ENCODE measurements at regions of chr10 and their contacts with region 1.

Region 1: GRCh38 chr10:31318854-31319601 is at the start of gene ZEB1:
- DNase-seq: peak; percentile 93
- H3K4me3 ChIP-seq: peak within 1 kb of the TSS; percentile 91 to 99 (median 96)
- H3K27ac ChIP-seq: peak within 1 kb of the TSS; percentile 97 to 100 (median 98)
- H3K4me1 ChIP-seq: peaks cover 7 to 34% (median 32%) of the 10 kb centered on the region in 4 donors
- H3K27me3 ChIP-seq: no peaks in the 10 kb centered on the region
- CTCF ChIP-seq: peak; percentile 51 to 76 (median 63)
- EP300 ChIP-seq: no peak
- POLR2A ChIP-seq: peak; percentile 49
- total RNA-seq, gene ZEB1: 124 to 189 (median 154) TPM

Region 2: DNA sequence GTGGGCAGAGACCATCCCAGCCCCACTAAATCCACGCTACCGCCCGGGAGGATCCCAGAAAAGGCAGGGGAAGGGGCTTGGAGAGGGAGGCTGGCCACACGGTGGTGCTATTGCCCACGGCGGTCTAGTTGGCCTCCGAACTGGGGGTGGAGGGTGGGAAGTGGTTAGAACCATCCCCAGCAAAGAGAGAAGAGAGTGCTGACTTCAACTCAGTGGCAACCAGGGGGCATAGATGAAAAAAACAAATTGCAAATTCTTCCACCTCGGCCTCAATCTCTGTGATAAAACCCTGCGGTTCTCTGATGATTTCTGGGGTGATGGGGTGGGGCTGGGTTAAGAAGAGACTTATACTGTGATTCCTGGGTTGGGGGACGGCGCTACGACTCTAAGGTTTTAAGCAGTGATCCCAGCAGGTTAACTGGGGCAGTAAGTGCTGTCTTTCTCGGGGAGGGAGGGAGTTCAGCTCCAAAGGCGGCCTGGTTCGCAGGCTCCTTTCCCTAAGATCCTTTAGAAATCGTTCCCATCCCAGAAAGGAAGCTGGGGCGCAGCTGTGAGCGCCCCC is 535.0 kb before region 1 on chr10:
- intact Hi-C with region 1: loop called (anchors 2 kb)
- DNase-seq: peak; percentile 94
- H3K4me3 ChIP-seq: peak overlapping the region; percentile 73 to 86 (median 78)
- H3K27ac ChIP-seq: peak overlapping the region; percentile 85 to 96 (median 92)
- H3K4me1 ChIP-seq: peaks cover 13 to 32% (median 25%) of the 10 kb centered on the region in 4 donors
- H3K27me3 ChIP-seq: no peaks in the 10 kb centered on the region
- CTCF ChIP-seq: peak; percentile 88 to 90 (median 89)
- EP300 ChIP-seq: no peak
- POLR2A ChIP-seq: no peak

Region 3: DNA sequence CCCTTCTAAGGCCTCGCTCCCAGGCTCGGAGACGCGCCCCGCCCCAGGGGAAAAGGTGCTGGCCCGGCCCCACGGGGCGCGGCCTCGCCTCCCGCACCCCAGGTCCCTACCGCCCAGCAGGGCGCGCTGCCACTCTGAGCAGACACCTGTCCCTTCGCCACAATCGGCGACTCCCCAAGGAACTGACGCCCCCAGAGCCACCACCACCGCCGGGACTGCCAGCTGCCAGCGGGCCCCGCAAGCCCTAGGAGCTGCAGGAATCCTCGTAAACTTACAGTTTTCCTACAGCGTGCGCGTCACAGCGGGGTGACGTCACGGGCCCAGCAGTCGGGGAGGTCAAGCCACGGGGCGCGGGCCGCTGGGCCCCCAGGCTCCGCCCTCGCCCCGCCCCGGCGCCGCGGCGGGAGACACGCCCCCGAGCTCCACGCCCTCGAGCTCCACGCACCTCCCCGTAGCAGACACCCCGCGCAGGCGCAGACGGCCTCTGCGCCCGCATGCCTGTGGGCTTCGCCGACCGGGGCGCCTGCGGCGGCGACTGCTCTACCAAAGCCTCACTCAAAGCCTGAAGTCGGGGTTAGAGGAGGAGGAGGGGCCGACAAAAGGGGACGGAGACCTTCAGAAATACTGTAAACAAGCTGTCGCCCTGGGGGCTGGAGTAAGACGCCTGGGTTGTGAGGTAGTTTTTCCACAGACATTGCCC is 287.3 kb before region 1 on chr10 and contains the start of gene ZNF438:
- intact Hi-C with region 1: loop called (anchors 2 kb)
- DNase-seq: peak; percentile 98
- H3K4me3 ChIP-seq: peak within 1 kb of the TSS; percentile 63 to 74 (median 72)
- H3K27ac ChIP-seq: peak within 1 kb of the TSS; percentile 97 to 100 (median 98)
- H3K4me1 ChIP-seq: peaks cover 22 to 50% (median 47%) of the 10 kb centered on the region in 4 donors
- H3K27me3 ChIP-seq: no peaks in the 10 kb centered on the region
- CTCF ChIP-seq: peak; percentile 47 to 61 (median 61)
- EP300 ChIP-seq: no peak
- POLR2A ChIP-seq: peak; percentile 88
- total RNA-seq, gene ZNF438: 11.0 to 11.6 (median 11.3) TPM

Region 4: DNA sequence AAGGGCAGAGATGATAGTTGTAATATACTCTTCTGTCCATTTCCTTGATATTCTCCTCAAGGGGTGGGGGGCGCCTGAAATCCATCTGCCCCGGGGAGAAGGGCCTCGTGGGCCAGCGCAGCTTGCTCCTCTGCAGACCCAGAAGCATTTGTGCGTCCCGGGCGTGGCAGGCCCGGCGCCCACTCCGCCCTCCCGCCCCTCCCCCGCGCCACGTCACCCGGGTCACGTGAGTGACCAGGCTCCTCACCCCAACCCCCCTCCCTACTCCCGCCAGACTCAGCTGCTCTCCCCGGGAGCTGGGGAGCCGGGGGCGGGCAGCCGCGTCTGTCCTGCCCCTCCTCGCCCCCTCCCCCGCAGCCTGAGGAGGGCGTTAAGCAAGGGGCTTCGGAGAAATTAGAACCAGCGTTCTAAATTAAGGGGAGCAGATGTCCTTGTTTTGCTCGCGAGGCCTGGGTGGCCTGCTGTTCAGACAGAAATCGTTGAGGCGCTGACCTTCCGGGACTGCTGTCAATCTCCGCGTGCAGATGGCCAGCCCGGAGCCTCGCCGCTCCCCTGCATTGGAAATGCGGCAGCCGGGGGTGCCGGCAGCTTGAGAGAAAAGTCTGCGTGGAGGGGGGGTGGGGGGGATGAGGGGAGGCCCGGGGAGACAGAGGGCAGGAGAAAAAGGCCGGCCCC is 185.3 kb before region 1 on chr10:
- intact Hi-C with region 1: loop called (anchors 2 kb)
- DNase-seq: peak; percentile 95
- H3K4me3 ChIP-seq: peak overlapping the region; percentile 56 to 62 (median 60)
- H3K27ac ChIP-seq: peak overlapping the region; percentile 78 to 88 (median 86)
- H3K4me1 ChIP-seq: peaks cover 23 to 47% (median 38%) of the 10 kb centered on the region in 4 donors
- H3K27me3 ChIP-seq: no peaks in the 10 kb centered on the region
- CTCF ChIP-seq: no peak
- EP300 ChIP-seq: no peak
- POLR2A ChIP-seq: peak; percentile 49

Region 5: GRCh38 chr10:31278279-31278941 is 40.6 kb before region 1 on chr10:
- intact Hi-C with region 1: no loop called
- DNase-seq: no peak
- H3K4me3 ChIP-seq: no peak overlapping the region
- H3K27ac ChIP-seq: no peak overlapping the region
- H3K4me1 ChIP-seq: no peaks in the 10 kb centered on the region
- H3K27me3 ChIP-seq: no peaks in the 10 kb centered on the region
- CTCF ChIP-seq: no peak
- EP300 ChIP-seq: no peak
- POLR2A ChIP-seq: no peak

Region 6: DNA sequence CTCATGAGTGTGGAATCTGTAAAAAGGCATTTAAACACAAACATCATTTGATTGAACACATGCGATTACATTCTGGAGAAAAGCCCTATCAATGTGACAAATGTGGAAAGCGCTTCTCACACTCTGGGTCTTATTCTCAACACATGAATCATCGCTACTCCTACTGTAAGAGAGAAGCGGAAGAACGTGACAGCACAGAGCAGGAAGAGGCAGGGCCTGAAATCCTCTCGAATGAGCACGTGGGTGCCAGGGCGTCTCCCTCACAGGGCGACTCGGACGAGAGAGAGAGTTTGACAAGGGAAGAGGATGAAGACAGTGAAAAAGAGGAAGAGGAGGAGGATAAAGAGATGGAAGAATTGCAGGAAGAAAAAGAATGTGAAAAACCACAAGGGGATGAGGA is 207.7 kb after region 1 on chr10:
- intact Hi-C with region 1: no loop called
- DNase-seq: no peak
- H3K4me3 ChIP-seq: no peak overlapping the region
- H3K27ac ChIP-seq: no peak overlapping the region
- H3K4me1 ChIP-seq: peaks cover 0 to 15% (median 10%) of the 10 kb centered on the region in 4 donors
- H3K27me3 ChIP-seq: no peaks in the 10 kb centered on the region
- CTCF ChIP-seq: no peak
- EP300 ChIP-seq: no peak
- POLR2A ChIP-seq: no peak

Region 7: GRCh38 chr10:31603235-31604087 is 284.4 kb after region 1 on chr10:
- intact Hi-C with region 1: loop called (anchors 5 kb)
- DNase-seq: peak; percentile 98
- H3K4me3 ChIP-seq: peak overlapping the region; percentile 61 to 83 (median 66)
- H3K27ac ChIP-seq: peak overlapping the region; percentile 81 to 89 (median 87)
- H3K4me1 ChIP-seq: peaks cover 14 to 41% (median 34%) of the 10 kb centered on the region in 4 donors
- H3K27me3 ChIP-seq: no peaks in the 10 kb centered on the region
- CTCF ChIP-seq: peak in 1 of 3 experiments; percentile 10
- EP300 ChIP-seq: no peak
- POLR2A ChIP-seq: peak; percentile 88

Region 8: DNA sequence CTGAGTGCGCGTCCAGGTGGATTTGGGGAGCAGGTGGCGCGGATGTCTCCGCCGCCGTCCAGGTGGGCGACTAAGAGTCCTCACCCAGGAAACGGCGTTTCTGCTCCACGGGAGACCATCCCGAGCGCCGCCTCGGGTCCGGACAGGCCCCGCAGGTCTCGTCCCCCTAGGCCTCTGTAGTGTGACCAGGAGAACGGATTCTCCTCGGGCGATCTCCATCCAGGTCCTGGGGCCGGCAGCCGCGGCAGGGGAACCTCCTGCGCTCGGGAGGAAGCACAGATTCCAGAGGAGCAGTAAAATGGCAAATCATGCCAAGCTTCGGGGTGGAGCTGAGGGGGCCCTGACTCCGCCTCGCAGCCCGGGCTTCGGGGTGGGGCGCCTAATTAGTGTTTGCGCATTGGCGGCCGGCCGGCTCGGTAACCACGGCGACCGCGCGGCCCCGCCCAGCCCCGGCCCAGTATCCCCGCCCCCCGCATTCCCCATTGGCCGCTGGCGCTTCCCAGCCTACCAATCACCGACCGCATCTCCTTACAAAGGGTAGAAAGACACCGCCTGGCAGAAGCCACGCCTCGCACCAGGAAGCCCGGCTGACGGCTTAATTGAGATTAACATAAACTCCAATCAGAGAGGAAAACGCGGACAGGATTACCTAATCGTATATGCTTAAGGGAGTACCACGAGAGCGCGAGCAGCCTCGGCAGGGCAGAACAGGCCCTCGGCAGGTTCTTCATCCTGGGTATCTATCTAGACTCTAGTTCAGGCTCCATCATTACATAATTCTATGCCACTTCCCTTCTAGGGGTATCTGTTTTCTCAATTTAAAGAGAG is 441.0 kb after region 1 on chr10:
- intact Hi-C with region 1: loop called (anchors 10 kb)
- DNase-seq: peak; percentile 99
- H3K4me3 ChIP-seq: peak overlapping the region; percentile 78 to 97 (median 86)
- H3K27ac ChIP-seq: peak overlapping the region; percentile 89 to 97 (median 96)
- H3K4me1 ChIP-seq: peaks cover 26 to 41% (median 38%) of the 10 kb centered on the region in 4 donors
- H3K27me3 ChIP-seq: no peaks in the 10 kb centered on the region
- CTCF ChIP-seq: no peak
- EP300 ChIP-seq: no peak
- POLR2A ChIP-seq: peak; percentile 95